ENCODE measurements at regions of chr12 and their contacts with region 1.

Region 1: DNA sequence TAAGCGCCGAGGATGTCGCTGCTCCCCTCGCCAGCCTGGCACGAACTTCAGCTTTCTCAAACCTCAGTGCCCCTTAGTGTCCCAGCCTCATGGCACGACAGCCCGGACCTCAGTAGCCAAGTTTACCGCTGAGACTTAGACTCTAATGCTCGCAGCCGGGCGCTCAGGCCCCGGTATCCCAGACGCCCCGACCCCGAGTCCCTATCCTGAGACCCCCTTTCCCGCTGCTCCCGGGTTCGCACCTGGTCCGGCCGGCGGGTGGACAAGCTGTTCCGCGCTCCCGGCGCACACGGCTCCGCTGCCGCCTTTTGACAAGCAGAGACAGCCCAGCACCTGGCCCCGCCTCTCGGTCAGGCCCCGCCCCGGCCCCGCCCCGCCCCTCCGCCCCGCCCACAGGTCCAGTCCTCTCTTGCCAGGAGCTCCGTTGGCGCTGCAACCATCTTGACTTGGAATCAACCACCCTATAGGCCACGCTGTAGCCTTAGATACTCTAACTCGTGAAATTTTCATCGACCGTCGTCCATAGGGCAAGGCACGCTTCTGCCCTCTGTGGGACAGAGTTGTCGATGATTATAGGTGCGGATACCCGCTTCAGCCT is at the start of gene VDR:
- DNase-seq: peak; percentile 74 to 89 (median 87)
- ATAC-seq: peak; percentile 89 to 91
- H3K4me3 ChIP-seq: peak within 1 kb of the TSS; percentile 47
- H3K27ac ChIP-seq: no peak within 1 kb of the TSS
- H3K4me1 ChIP-seq: peaks cover 4% of the 10 kb centered on the region
- H3K27me3 ChIP-seq: no peaks in the 10 kb centered on the region
- total RNA-seq, gene VDR: 0.93 to 3.0 (median 1.3) TPM

Region 2: DNA sequence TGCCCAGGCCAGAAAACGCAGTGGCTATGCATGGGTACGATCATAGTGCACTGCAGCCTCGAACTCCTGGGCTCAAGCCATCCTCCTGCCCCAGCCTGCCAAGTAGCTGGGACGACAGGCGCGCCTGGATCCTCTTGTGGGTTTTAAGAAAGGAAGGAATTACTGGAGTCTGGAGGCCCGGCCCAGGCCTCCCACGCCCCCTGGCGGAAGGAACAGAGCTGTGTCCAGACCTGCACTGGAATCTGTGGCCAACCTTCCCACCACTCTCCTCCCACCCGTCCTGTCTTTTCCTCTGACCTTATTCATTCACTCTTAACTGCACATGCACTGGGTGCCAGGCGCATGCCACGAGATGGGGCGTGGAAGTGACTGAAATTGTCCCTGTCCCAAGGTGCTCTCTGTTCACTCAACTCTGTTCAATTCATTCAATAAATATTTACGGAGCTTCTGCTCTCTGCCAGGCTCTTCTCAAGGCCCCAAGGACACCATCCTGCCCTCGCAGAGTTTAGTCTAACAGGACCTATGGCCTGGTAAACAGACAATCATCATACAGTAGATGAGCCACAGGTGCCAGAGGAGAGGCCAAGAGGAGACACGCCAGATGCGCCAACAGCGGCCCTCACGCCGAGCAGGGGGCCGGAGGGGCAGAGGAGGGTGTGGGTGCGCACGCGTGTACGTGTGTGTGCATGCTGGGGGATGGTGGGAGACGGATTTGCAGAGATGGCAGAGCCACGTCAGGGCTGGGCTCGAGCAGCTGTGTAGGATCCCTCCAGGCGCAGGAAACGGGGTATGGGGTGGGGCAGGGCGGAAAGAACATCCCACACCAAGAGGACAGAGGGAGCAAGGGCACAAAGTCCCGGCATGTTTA is 44.9 kb after region 1 on chr12:
- intact Hi-C with region 1: loop called in 2 of 4 experiments (anchors 2 to 5 kb)
- DNase-seq: peak; percentile 81 to 92 (median 89)
- ATAC-seq: peak; percentile 89 to 91
- H3K4me3 ChIP-seq: no peak overlapping the region
- H3K27ac ChIP-seq: no peak overlapping the region
- H3K4me1 ChIP-seq: no peaks in the 10 kb centered on the region
- H3K27me3 ChIP-seq: no peaks in the 10 kb centered on the region